ENCODE measurements at regions of chr2 and their contacts with region 1.

Region 1: GRCh38 chr2:232521959-232522622 is 1.9 kb downstream of the PRSS56 start:
- DNase-seq: peak; percentile 96
- H3K4me3 ChIP-seq: peak overlapping the region; percentile 9 to 44; a peak in 2 of 4 replicates
- H3K27ac ChIP-seq: no peak overlapping the region
- H3K4me1 ChIP-seq: peaks cover 0 to 23% of the 10 kb centered on the region in 2 experiments; a peak in 1 of 4 replicates
- H3K27me3 ChIP-seq: peaks cover 29% of the 10 kb centered on the region
- CTCF ChIP-seq: peak; percentile 71
- EP300 ChIP-seq: no peak
- RAD21 ChIP-seq: peak; percentile 78

Region 2: GRCh38 chr2:232321156-232321816 is 200.8 kb before region 1 on chr2:
- CTCF ChIA-PET with region 1: no interaction called
- POLR2A ChIA-PET with region 1: no interaction called
- DNase-seq: no peak
- H3K4me3 ChIP-seq: no peak overlapping the region
- H3K27ac ChIP-seq: no peak overlapping the region
- H3K4me1 ChIP-seq: peaks cover 0 to 26% of the 10 kb centered on the region in 2 experiments; a peak in 1 of 4 replicates
- H3K27me3 ChIP-seq: no peaks in the 10 kb centered on the region
- CTCF ChIP-seq: 0 out of 2 replicates have a peak, but pooled peaks have one; percentile 10
- EP300 ChIP-seq: no peak
- RAD21 ChIP-seq: no peak

Region 3: DNA sequence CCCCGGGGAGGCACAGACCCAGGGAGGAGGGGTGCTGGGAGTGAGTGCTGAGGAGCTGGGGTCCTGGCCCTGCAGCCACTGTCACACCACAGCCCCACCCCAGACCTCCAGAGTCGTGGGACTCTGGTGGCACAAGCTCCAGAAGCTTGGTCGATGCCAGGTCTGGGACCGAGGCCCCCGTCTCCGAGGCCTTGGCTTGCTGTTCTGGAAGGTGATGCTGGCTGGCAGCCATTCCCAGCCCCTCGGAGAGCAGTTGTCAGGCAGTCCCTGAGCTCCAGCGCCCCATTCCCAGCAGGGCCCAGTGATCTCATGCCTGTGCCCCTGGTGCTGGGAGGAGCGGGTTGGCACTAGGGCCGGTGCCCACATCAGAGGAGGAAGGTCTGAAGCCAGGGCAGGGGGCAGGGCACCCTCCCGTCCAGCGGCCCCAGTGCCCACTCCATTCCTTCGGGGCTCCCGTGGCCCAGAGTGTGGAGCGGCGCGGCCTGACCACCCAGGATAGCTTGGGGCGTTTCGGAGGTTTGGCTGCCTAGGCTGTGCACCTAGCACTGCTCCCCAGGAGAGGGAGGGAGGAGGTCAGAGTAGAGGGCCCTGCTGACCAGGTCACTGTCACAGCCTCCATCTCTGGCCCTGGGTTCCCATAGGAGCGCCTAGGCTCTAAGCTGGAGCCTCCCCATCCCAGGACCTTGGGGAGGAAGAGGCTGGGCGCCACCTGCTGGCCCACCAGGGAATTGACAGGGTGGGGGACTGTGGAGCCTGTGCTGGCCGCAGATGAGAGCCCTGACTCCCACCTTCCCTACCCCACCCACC is 82.9 kb before region 1 on chr2:
- CTCF ChIA-PET with region 1: interaction called, 196 read pairs
- POLR2A ChIA-PET with region 1: no interaction called
- DNase-seq: peak; percentile 70
- H3K4me3 ChIP-seq: no peak overlapping the region
- H3K27ac ChIP-seq: no peak overlapping the region
- H3K4me1 ChIP-seq: no peaks in the 10 kb centered on the region; a peak in 1 of 4 replicates
- H3K27me3 ChIP-seq: no peaks in the 10 kb centered on the region
- CTCF ChIP-seq: peak; percentile 67
- EP300 ChIP-seq: no peak
- RAD21 ChIP-seq: peak; percentile 29

Region 4: GRCh38 chr2:232463701-232464543 is 58.2 kb before region 1 on chr2:
- CTCF ChIA-PET with region 1: interaction called, 36 read pairs
- POLR2A ChIA-PET with region 1: no interaction called
- DNase-seq: peak; percentile 5
- H3K4me3 ChIP-seq: no peak overlapping the region
- H3K27ac ChIP-seq: no peak overlapping the region
- H3K4me1 ChIP-seq: no peaks in the 10 kb centered on the region
- H3K27me3 ChIP-seq: peaks cover 11% of the 10 kb centered on the region; the same call in 1 of the 2 replicates
- CTCF ChIP-seq: no peak
- EP300 ChIP-seq: no peak
- RAD21 ChIP-seq: no peak

Region 5: GRCh38 chr2:232492351-232492761 is 29.7 kb before region 1 on chr2:
- CTCF ChIA-PET with region 1: interaction called, 17 read pairs
- POLR2A ChIA-PET with region 1: interaction called, 3 read pairs
- DNase-seq: no peak
- H3K4me3 ChIP-seq: no peak overlapping the region
- H3K27ac ChIP-seq: no peak overlapping the region
- H3K4me1 ChIP-seq: peaks cover 0 to 15% of the 10 kb centered on the region in 2 experiments; a peak in 1 of 4 replicates
- H3K27me3 ChIP-seq: 0 out of 2 replicates have a peak, but pooled peaks cover 1% of the 10 kb centered on the region
- CTCF ChIP-seq: no peak
- EP300 ChIP-seq: no peak
- RAD21 ChIP-seq: no peak

Region 6: DNA sequence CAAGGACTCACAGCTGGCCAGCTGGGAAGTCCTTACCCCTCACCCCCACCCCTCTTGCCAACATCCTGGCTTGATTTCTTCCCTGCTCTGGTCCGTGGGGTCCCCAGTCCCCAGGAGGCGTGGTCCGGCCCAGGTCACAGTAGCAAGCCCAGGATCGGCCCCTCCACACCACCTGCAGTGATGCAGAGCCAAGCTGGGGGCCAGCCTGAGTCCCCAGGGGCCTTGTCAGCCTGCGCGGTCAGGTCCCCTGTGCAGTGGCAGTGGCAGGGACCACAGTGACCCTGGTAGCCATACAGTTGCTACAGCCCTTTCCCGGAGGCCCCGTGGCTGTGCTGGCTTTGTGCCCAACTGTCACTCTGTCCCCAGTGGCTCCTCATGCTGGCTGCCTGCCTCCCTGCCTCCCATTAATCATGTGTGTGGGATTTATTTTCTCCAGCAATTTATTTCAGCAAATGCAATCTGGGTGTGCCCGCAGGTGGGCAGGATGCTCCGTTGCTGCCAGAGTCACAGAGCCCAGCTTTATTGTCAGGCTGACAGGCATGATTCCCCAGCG is 10.7 kb before region 1 on chr2:
- CTCF ChIA-PET with region 1: interaction called, 55 read pairs
- POLR2A ChIA-PET with region 1: no interaction called
- DNase-seq: peak; percentile 68
- H3K4me3 ChIP-seq: no peak overlapping the region
- H3K27ac ChIP-seq: no peak overlapping the region
- H3K4me1 ChIP-seq: peaks cover 0 to 22% of the 10 kb centered on the region in 2 experiments; a peak in 1 of 4 replicates
- H3K27me3 ChIP-seq: peaks cover 19% of the 10 kb centered on the region
- CTCF ChIP-seq: no peak
- EP300 ChIP-seq: no peak
- RAD21 ChIP-seq: no peak

Region 7: DNA sequence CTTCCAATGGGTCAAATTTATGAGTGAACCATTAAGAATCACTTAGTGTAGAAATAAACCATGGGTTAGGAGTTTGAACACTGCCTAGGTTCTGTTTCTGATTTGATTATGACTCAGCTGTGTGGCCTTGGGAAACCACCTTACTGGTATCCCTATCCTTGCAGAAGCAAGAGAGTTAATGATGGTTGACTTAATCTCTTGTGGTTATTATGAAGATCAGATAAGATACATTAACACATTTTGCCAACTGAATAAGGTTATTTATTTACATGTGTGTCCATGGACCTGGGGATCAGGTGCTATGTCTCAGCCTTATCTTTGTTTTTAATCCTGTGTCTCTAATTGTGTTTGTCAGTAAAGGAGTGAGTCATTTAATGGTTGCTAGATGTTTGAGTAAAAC is 259.7 kb after region 1 on chr2:
- CTCF ChIA-PET with region 1: no interaction called
- POLR2A ChIA-PET with region 1: no interaction called
- DNase-seq: peak; percentile 3
- H3K4me3 ChIP-seq: no peak overlapping the region
- H3K27ac ChIP-seq: peak overlapping the region; percentile 31; a peak in 2 of 4 replicates
- H3K4me1 ChIP-seq: peaks cover 0 to 2% of the 10 kb centered on the region in 2 experiments; a peak in 1 of 4 replicates
- H3K27me3 ChIP-seq: no peaks in the 10 kb centered on the region
- CTCF ChIP-seq: no peak
- EP300 ChIP-seq: 0 out of 4 replicates have a peak, but pooled peaks of 1 of the 2 experiments have one; percentile 45
- RAD21 ChIP-seq: no peak

Measured in SK-N-SH (cell line).